Activated T-helper 2 cell treated with anti-CD3 and anti-CD28 coated beads, Interferon-gamma antibody, Interleukin-2, Interleukin-4, amounts not matched to agents 10 μg/mL and 5 μg/mL and 100 μg/mL, durations not matched to agents 14 hours and 24 hours and 36 hours (primary cell): ENCODE measurements at regions of chr20 and their contacts with region 1.

Region 1: DNA sequence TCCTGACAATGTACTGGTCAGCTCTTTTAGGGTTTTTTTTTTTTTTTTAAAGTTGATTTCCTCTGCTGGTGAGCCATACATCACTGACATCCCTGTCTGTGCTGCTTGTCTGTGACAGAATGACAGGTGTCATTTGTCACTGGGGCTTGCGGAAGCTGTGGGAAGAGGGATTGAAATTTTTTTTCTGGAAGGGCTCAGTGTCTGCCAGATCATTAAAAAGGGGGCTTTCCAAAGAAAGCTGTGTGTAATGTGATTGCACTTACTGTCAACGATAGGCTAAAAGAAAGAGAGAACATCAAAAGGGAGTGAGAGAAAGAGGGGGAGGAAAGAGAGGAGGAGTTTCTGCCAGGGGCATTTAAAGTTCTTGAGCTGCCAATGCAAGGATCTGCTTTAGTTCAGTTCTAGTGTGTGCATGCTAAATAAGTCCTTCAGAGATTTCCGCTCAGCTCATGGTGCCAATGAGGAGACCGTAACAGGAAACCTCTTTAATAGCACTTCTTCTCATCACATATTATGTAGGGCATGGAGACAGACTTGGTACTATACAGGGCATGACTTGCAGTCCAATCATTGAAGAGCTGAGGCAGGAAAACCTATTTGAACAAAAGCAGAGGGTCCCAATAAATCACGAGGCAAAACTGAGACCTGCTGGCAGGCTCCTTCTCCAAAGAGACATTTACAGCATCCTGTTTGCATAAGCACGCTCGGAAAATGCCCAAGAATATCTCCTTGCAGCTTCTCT is 177.2 kb downstream of the TSHZ2 start:
- DNase-seq: no peak
- H3K4me3 Mint-ChIP-seq: no peak overlapping the region
- H3K27ac Mint-ChIP-seq: no peak overlapping the region
- H3K4me1 Mint-ChIP-seq: peaks cover 27% of the 10 kb centered on the region
- H3K27me3 Mint-ChIP-seq: peaks cover 5% of the 10 kb centered on the region

Region 2: GRCh38 chr20:52405417-52405816 is 743.9 kb before region 1 on chr20:
- intact Hi-C with region 1: loop called (anchors 2 kb)
- DNase-seq: no peak
- H3K4me3 Mint-ChIP-seq: no peak overlapping the region
- H3K27ac Mint-ChIP-seq: peak overlapping the region; percentile 17
- H3K4me1 Mint-ChIP-seq: peaks cover 41% of the 10 kb centered on the region
- H3K27me3 Mint-ChIP-seq: no peaks in the 10 kb centered on the region

Region 3: DNA sequence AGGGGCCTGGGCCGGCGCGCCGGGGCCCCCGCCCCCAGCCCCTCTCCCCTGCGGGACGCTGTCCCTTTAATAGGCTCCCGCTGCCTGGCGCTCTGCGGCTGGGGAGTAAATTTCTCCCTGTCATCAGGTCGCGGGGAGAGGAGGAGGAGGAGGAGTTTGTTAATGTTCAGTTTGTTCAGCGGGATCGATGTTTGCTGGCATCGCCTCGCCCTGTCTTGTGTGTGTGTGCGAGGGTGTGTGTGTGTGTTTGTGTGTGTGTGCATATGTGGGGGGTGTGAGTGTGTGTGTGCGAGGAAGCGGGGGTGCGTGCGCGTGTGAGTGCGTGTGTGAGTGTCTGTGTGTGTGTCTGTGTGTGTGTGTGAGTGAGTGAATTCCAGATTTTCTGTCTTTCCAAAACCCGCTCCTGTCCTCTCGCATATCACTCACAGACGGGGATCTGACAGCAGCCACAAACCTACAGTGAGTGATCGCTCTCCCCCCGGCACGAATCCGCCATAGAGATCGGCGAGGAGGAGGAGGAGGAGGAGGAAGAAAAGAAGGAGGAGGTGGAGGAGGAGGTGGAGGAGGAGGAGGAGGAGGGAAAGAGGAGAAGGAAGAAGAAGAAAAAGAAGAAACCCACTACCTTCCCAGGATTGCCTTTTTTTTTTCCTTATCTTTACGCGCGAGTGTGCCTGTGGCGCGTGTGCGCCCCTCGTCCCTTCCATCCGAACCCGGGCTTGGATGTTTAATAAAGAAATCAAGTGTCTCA is 177.0 kb before region 1 on chr20 and contains the start of gene TSHZ2:
- intact Hi-C with region 1: loop called (anchors 1 kb)
- DNase-seq: peak; percentile 20
- H3K4me3 Mint-ChIP-seq: peak within 1 kb of the TSS; percentile 93
- H3K27ac Mint-ChIP-seq: peak within 1 kb of the TSS; percentile 94
- H3K4me1 Mint-ChIP-seq: peaks cover 37% of the 10 kb centered on the region
- H3K27me3 Mint-ChIP-seq: peaks cover 17% of the 10 kb centered on the region
- total RNA-seq, gene TSHZ2: 19.8 and 23.0 TPM in 2 replicates

Region 4: DNA sequence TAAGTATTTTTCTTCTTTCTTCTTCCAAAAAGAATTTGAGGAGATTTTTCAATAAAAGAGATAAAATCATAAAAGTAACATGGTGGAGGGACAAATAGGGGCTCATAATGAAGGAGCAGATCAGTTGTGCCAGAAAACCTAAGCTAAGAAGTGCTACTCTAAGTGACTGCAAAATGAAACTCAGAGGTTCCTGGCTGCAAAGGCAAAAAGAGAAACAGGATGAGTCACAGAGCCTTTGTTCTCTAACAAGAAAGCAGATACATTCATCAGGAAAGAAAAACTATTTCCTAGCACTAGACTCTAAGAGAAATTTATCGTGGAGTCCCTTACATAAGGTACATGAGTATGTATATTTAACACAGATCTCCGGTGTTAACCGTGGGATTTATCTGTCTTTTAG is 127.4 kb before region 1 on chr20:
- intact Hi-C with region 1: loop called (anchors 2 kb)
- DNase-seq: no peak
- H3K4me3 Mint-ChIP-seq: no peak overlapping the region
- H3K27ac Mint-ChIP-seq: peak overlapping the region; percentile 56
- H3K4me1 Mint-ChIP-seq: peaks cover 50% of the 10 kb centered on the region
- H3K27me3 Mint-ChIP-seq: no peaks in the 10 kb centered on the region

Region 5: DNA sequence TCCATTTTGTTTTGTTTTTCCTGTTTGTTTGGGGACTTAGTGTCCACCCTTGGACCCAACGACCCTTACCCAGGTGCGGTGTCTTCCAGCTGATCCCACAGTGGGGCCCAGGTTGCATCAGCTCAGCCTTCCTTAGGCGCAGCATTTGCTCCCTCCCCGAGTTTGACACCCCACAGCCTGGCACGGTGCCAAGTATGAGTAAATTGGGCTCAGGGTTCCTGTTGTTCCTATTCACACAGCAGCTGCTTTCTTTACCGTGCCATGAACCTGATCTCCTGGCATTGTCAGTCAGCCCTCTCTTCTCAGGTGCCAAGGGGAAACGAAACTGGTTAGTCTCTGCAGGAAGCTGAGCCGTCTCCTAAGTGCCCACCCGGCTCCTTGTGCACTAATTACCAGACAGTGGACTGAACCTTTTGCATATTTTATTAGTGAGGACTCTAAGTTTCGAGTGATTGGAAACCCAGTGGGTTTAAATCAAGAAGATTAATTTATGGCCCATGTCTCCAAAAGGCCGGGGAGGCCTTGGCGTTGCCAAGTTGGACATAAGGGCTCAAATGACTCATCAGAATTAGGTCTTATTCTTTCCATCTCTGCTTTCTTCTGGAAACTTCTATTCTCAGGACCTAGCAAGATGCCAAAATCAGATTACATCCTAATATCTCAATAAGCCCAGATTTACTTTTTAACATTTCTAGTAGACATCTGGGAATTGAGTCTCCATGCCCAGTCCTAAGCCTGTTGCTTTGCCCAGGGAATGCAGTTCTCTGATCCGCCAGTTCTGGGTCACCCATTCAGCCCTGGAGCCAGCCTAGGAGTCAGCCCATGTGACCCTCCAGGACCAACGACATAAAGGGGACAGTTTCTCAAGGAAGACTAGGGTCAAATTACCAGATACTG is 108.4 kb before region 1 on chr20:
- intact Hi-C with region 1: no loop called
- DNase-seq: no peak
- H3K4me3 Mint-ChIP-seq: no peak overlapping the region
- H3K27ac Mint-ChIP-seq: no peak overlapping the region
- H3K4me1 Mint-ChIP-seq: peaks cover 3% of the 10 kb centered on the region
- H3K27me3 Mint-ChIP-seq: no peaks in the 10 kb centered on the region

Region 6: GRCh38 chr20:53070706-53071392 is 78.5 kb before region 1 on chr20:
- intact Hi-C with region 1: loop called (anchors 1 kb)
- DNase-seq: no peak
- H3K4me3 Mint-ChIP-seq: no peak overlapping the region
- H3K27ac Mint-ChIP-seq: peak overlapping the region; percentile 69
- H3K4me1 Mint-ChIP-seq: peaks cover 28% of the 10 kb centered on the region
- H3K27me3 Mint-ChIP-seq: no peaks in the 10 kb centered on the region

Region 7: GRCh38 chr20:53085720-53086119 is 63.6 kb before region 1 on chr20:
- intact Hi-C with region 1: no loop called
- DNase-seq: no peak
- H3K4me3 Mint-ChIP-seq: no peak overlapping the region
- H3K27ac Mint-ChIP-seq: no peak overlapping the region
- H3K4me1 Mint-ChIP-seq: peaks cover 15% of the 10 kb centered on the region
- H3K27me3 Mint-ChIP-seq: no peaks in the 10 kb centered on the region

Region 8: GRCh38 chr20:53104889-53105288 is 44.4 kb before region 1 on chr20:
- intact Hi-C with region 1: no loop called
- DNase-seq: no peak
- H3K4me3 Mint-ChIP-seq: no peak overlapping the region
- H3K27ac Mint-ChIP-seq: no peak overlapping the region
- H3K4me1 Mint-ChIP-seq: no peaks in the 10 kb centered on the region
- H3K27me3 Mint-ChIP-seq: no peaks in the 10 kb centered on the region

Region 9: GRCh38 chr20:53163486-53163885 is 14.2 kb after region 1 on chr20:
- intact Hi-C with region 1: loop called (anchors 1 kb)
- DNase-seq: no peak
- H3K4me3 Mint-ChIP-seq: no peak overlapping the region
- H3K27ac Mint-ChIP-seq: no peak overlapping the region
- H3K4me1 Mint-ChIP-seq: peaks cover 23% of the 10 kb centered on the region
- H3K27me3 Mint-ChIP-seq: no peaks in the 10 kb centered on the region

Region 10: DNA sequence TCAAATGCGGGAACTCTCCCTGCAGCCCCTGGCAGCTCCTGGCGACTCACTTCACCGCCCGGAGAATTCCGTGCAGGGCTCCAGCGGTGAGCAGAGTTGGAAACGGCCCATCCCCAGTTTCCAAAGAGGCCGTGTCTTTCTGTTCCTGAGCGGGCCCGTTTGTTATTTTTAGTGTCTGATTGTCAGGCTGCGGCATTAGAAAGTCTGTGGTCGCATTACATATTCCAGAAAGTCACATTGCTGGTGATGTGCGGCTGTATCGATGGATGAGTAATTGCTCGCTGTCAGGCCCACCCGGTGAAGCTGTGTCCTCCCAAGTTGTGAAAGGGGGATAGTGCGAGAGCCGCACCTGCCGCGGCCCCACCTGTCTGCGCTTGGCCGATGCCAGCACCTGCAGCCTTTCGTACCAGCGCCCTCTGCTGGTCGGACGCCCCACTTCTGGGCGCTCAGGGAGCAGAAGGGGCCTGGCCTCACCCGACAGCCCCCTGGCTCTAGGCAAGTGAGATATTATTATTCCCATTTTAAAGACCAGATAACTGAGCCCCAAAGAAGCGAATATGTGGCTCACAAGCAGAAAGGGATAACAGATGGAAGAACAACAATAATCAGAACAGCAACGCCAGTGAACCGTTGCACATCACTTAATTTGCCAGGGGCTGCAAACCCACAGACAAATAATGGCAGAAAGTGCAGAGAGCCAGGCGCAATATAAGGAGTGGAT is 67.7 kb after region 1 on chr20:
- intact Hi-C with region 1: loop called (anchors 5 kb)
- DNase-seq: peak; percentile 58
- H3K4me3 Mint-ChIP-seq: no peak overlapping the region
- H3K27ac Mint-ChIP-seq: no peak overlapping the region
- H3K4me1 Mint-ChIP-seq: peaks cover 23% of the 10 kb centered on the region
- H3K27me3 Mint-ChIP-seq: peaks cover under 1% of the 10 kb centered on the region